ENCODE measurements at regions of chr14 and their contacts with region 1.

Region 1: GRCh38 chr14:105527661-105528581 is 1.5 kb downstream of the TMEM121 start:
- ATAC-seq: peak; percentile 31 to 77 (median 56)
- H3K4me3 ChIP-seq: peak overlapping the region; percentile 43 to 80 (median 52)
- H3K27ac ChIP-seq: no peak overlapping the region
- H3K4me1 ChIP-seq: peaks cover 0 to 13% of the 10 kb centered on the region in 2 donors

Region 2: GRCh38 chr14:105999361-106000028 is 471.6 kb after region 1 on chr14:
- in situ Hi-C with region 1: loop called in 1 of 9 experiments (anchors 25 kb)
- ATAC-seq: peak in 3 of 8 experiments; percentile 50 to 72 (median 69)
- H3K4me3 ChIP-seq: no peak overlapping the region
- H3K27ac ChIP-seq: no peak overlapping the region
- H3K4me1 ChIP-seq: no peaks in the 10 kb centered on the region

Measured in motor neuron (in vitro differentiated cells).